ENCODE measurements at regions of chr9 and their contacts with region 1.

Region 1: GRCh38 chr9:126564711-126565110 is 49.0 kb upstream of the LMX1B start:
- DNase-seq: no peak
- H3K4me3 ChIP-seq: no peak overlapping the region
- H3K27ac ChIP-seq: no peak overlapping the region
- H3K4me1 ChIP-seq: no peaks in the 10 kb centered on the region
- H3K27me3 ChIP-seq: no peaks in the 10 kb centered on the region
- CTCF ChIP-seq: no peak
- EP300 ChIP-seq: no peak
- POLR2A ChIP-seq: no peak

Region 2: DNA sequence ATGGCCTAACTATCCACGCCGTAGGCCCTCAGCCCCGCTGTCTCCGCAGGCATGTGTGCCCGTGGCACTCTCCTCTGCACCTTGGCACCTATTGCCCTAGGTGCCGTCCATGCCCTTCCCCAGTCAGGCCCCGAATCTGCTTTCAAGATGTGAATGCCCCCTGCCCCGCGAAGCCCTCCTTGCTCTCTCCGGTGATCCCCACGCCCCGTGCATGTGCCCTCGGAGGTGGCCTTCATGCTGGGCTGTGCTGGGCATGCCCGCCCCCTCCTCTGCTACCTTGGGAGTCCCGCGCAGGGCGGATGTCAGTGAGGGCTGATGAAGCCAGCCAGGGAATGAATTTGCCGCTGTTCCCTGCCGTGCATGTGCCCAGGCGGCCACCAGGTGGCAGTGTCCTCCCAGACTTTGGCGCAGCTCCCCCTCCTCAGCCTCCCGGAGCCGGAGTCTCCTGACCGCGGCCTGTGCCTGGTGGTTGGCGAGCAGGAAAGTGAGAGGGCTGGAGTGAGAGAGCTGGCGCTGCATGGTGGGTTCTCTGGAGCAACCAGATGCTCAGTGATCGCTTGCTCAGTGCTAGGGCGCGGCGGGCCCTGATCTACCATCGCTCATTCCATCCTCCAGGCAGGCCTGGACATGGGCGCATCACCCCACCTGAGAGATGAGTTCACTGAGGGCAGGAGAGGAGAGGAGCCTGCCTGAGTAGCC is 63.9 kb before region 1 on chr9:
- intact Hi-C with region 1: loop called in 3 of 4 experiments (anchors 5 kb)
- DNase-seq: peak; percentile 75 to 87 (median 84)
- H3K4me3 ChIP-seq: no peak overlapping the region
- H3K27ac ChIP-seq: no peak overlapping the region
- H3K4me1 ChIP-seq: peaks cover 5% of the 10 kb centered on the region
- H3K27me3 ChIP-seq: no peaks in the 10 kb centered on the region
- CTCF ChIP-seq: peak; percentile 85 to 98 (median 91)
- EP300 ChIP-seq: no peak
- POLR2A ChIP-seq: no peak

Region 3: DNA sequence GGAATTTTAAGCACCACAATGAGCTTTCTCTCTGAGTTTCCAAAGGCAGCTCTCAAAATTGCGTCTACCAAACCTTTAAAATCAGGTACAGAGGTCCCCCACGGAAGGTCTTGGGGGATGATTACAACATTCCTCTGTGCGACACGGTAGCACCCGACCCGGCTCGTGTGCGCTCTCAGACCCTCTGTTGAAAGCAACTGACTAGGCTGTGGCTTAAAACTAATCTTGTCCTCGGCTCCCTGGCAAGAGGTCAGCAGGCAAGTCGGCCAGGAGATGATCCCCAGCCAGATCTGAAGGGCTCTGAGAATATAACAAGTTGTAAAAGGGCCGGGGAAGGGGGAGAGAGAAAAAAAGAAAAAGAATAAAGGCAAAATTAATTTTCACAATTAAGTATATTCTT is 43.6 kb before region 1 on chr9:
- intact Hi-C with region 1: loop called in 1 of 4 experiments (anchors 1 kb)
- DNase-seq: no peak
- H3K4me3 ChIP-seq: no peak overlapping the region
- H3K27ac ChIP-seq: no peak overlapping the region
- H3K4me1 ChIP-seq: no peaks in the 10 kb centered on the region
- H3K27me3 ChIP-seq: no peaks in the 10 kb centered on the region
- CTCF ChIP-seq: no peak
- EP300 ChIP-seq: no peak
- POLR2A ChIP-seq: no peak

Region 4: GRCh38 chr9:126532019-126532462 is 32.7 kb before region 1 on chr9:
- intact Hi-C with region 1: no loop called
- DNase-seq: peak in 2 of 5 donors; percentile 35 to 42
- H3K4me3 ChIP-seq: no peak overlapping the region
- H3K27ac ChIP-seq: no peak overlapping the region
- H3K4me1 ChIP-seq: no peaks in the 10 kb centered on the region
- H3K27me3 ChIP-seq: no peaks in the 10 kb centered on the region
- CTCF ChIP-seq: no peak
- EP300 ChIP-seq: no peak
- POLR2A ChIP-seq: no peak

Region 5: DNA sequence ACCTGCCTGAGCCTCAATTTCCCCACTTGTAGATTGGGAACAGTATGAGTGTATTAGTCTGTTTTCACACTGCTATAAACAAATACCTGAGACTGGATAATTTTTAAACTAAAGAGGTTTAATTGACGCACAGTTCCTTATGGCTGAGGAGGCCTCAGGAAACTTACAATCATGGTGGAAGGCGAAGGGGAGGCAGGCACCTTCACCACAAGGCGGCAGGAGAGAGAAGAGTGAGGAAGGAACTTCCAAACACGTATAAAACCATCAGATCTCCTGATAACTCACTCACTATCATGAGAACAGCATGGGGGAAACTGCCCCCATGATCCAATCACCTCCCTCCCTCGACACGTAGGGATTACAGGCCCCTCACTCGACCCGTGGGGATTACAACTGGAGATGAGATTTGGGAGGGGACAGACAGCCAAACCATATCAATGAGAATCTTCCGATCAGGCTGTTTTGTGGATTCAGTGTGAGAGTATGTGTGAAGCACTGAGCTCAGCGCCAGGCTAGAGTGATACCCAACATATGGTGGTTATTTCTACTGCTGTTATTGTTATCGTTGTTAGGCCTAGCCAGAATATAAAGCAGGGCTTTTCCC is 34.4 kb after region 1 on chr9:
- intact Hi-C with region 1: no loop called
- DNase-seq: no peak
- H3K4me3 ChIP-seq: no peak overlapping the region
- H3K27ac ChIP-seq: no peak overlapping the region
- H3K4me1 ChIP-seq: no peaks in the 10 kb centered on the region
- H3K27me3 ChIP-seq: no peaks in the 10 kb centered on the region
- CTCF ChIP-seq: no peak
- EP300 ChIP-seq: no peak
- POLR2A ChIP-seq: no peak

Region 6: GRCh38 chr9:126745574-126746411 is 181.1 kb after region 1 on chr9:
- intact Hi-C with region 1: no loop called
- DNase-seq: no peak
- H3K4me3 ChIP-seq: no peak overlapping the region
- H3K27ac ChIP-seq: no peak overlapping the region
- H3K4me1 ChIP-seq: no peaks in the 10 kb centered on the region
- H3K27me3 ChIP-seq: no peaks in the 10 kb centered on the region
- CTCF ChIP-seq: no peak
- EP300 ChIP-seq: no peak
- POLR2A ChIP-seq: no peak